ENCODE measurements at regions of chr2 and their contacts with region 1.

Region 1: GRCh38 chr2:112481050-112481527 is 867 bp upstream of the TTL start:
- DNase-seq: peak; percentile 86
- H3K4me3 Mint-ChIP-seq: peak overlapping the region; percentile 80
- H3K27ac Mint-ChIP-seq: peak overlapping the region; percentile 75
- H3K4me1 Mint-ChIP-seq: peaks cover 23% of the 10 kb centered on the region
- H3K27me3 Mint-ChIP-seq: no peaks in the 10 kb centered on the region
- CTCF ChIP-seq: peak; percentile 78

Region 2: DNA sequence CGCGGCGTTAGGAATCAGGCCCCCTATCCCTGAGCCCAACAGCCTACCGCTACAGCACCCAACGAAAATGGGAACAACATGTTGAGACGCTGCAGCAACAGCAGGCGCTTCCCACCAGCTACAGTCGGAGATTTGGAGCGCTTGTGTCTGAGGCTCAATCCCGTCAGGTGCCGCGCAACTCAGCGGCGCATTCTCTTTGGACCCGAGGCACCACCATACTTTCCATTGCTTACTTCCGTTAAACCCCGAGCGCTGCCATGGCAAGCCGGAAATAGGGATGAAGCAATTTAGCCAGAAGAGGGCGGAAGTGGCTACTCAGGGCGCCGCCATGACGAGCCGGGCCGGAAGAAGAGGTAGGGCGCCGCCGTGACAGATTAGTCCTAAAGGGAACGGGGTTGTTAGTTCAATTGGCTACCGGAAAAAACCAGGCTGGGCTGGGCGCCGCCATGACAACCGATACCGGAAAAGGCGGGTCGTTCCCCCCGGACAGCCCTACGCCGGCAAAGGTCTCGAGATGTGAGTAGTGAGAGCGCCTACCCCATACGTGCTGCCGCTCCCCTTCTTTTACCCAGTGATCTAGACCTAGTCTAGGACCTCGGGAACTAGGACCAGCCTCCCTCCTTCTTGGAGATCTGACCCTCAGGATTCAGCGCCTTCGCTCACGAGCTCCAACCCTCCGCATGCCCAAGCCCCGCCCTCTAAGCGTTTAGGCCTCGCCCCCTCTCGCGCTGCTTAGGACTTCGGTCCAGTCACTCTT is 103.2 kb after region 1 on chr2 and contains the start of gene CHCHD5:
- CTCF ChIA-PET with region 1: no interaction called
- intact Hi-C with region 1: loop called (anchors 10 kb)
- DNase-seq: peak; percentile 81
- H3K4me3 Mint-ChIP-seq: peak within 1 kb of the TSS; percentile 83
- H3K27ac Mint-ChIP-seq: peak within 1 kb of the TSS; percentile 96
- H3K4me1 Mint-ChIP-seq: peaks cover 19% of the 10 kb centered on the region
- H3K27me3 Mint-ChIP-seq: no peaks in the 10 kb centered on the region
- CTCF ChIP-seq: no peak
- total RNA-seq, gene CHCHD5: 18.0 and 20.1 TPM in 2 replicates

Region 3: GRCh38 chr2:112947374-112947773 is 466.3 kb after region 1 on chr2:
- CTCF ChIA-PET with region 1: no interaction called
- intact Hi-C with region 1: no loop called
- DNase-seq: no peak
- H3K4me3 Mint-ChIP-seq: no peak overlapping the region
- H3K27ac Mint-ChIP-seq: no peak overlapping the region
- H3K4me1 Mint-ChIP-seq: peaks cover 8% of the 10 kb centered on the region
- H3K27me3 Mint-ChIP-seq: no peaks in the 10 kb centered on the region
- CTCF ChIP-seq: no peak

Measured in Calu3 (cell line).